Right lobe of liver (tissue), 6 donors: ENCODE measurements at regions of chr6 and their contacts with region 1.

Region 1: DNA sequence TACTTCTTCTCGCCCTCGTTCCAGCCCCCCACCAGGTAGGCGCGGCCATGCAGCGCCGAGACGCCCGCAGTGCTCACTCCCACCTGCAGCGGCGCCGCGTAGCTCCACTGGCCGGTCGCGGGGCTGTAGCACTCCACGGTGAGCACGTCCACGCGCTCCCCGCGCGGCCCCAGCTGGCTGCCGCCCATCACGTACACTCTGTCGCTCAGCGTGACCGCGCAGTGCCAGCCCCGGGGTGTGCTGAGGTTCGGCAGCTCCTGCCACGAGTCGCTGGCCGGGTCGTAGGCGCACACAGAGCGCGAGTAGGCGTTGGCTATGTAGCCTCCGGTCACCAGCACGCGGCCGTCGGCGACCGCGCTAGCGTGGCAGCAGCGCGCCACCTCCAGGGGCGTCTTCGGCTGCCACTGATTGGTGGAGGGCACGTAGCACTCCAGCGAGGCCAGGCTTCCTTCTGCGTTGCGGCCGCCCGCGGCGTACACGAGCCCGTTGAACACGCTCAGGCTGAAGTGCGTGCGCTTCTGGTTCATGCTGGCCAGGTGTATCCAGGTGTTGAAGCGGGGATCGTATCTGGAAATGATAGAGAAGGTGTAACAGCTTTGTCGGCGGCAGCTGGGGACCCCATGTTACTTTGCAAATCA is 13.7 kb downstream of the KLHL31 start:
- DNase-seq: peak; percentile 91 to 93 (median 93)
- ATAC-seq: peak; percentile 92 to 97 (median 96)
- H3K4me3 ChIP-seq: peak overlapping the region; percentile 54 to 67 (median 63)
- H3K27ac ChIP-seq: peak overlapping the region; percentile 75 to 89 (median 89)
- H3K4me1 ChIP-seq: peaks cover 0 to 10% (median 4%) of the 10 kb centered on the region in 4 donors
- H3K27me3 ChIP-seq: no peaks in the 10 kb centered on the region
- CTCF ChIP-seq: peak; percentile 36 to 51 (median 42)
- POLR2A ChIP-seq: peak; percentile 77

Region 2: DNA sequence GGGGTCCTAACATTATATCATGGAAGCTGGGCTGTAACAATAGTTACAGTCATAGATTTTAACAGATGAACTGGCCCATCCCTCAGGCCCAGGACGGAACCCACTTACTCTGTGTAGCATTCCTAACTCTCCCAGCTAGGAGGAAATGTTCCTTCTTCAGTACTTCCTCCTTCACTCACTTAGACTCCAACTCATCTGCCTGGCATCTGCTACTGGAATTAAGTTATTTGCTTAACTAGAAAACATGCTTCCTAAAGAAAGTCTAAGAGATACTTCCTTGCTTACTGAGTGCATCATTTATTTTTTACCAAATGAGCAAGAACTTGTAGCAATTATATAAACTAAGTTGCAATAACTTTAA is 127.4 kb before region 1 on chr6:
- intact Hi-C with region 1: loop called in 1 of 2 experiments (anchors 10 kb)
- DNase-seq: no peak
- ATAC-seq: peak in 1 of 4 donors; percentile 33
- H3K4me3 ChIP-seq: no peak overlapping the region
- H3K27ac ChIP-seq: no peak overlapping the region
- H3K4me1 ChIP-seq: peaks cover 0 to 53% (median 12%) of the 10 kb centered on the region in 4 donors
- H3K27me3 ChIP-seq: no peaks in the 10 kb centered on the region
- CTCF ChIP-seq: no peak
- POLR2A ChIP-seq: no peak